ENCODE measurements at regions of chr11 and their contacts with region 1.

Region 1: DNA sequence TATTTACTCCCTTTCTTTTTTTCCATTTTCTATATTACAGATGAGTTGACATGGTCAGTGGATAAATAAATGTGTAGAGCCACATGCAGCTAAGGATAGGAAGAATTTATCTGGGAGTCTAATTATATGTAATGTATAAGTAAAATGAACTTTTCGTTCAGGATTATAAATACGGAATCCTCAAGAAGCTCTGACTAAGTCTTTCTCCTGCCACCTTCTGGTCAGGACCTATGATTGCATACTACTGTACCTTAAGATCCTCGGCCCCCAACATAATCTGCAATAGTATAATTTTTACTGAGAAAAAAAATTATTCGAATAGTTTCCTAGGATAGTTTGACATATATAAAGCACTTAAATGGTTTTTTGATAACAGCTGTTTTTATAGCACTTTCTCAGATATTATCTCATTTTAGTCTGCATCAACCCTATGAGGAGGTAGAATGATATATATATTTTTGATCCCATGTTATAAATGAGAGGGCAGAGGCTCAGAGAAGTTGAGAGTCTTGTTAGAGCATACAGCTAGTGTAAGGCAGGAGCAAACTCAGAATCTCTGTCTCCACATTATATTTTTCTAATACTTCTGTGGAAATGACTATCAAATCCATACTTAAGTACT is 36.1 kb downstream of the CCDC90B start:
- DNase-seq: peak; percentile 36 to 58
- ATAC-seq: peak; percentile 79 to 93; a peak in 4 of 6 replicates
- H3K4me3 ChIP-seq: no peak overlapping the region
- H3K27ac ChIP-seq: no peak overlapping the region
- H3K4me1 ChIP-seq: no peaks in the 10 kb centered on the region
- CTCF ChIP-seq: peak; percentile 77
- EP300 ChIP-seq: no peak
- POLR2A ChIP-seq: no peak
- RAD21 ChIP-seq: peak; percentile 65 to 66

Region 2: GRCh38 chr11:82900277-82901164 is 349.6 kb before region 1 on chr11 and contains the start of gene PRCP:
- CTCF ChIA-PET with region 1: interaction called, 17 read pairs
- POLR2A ChIA-PET with region 1: no interaction called
- DNase-seq: peak; percentile 91 to 94
- ATAC-seq: peak; percentile 90 to 95
- H3K4me3 ChIP-seq: peak within 1 kb of the TSS; percentile 72
- H3K27ac ChIP-seq: peak within 1 kb of the TSS; percentile 81 to 93
- H3K4me1 ChIP-seq: peaks cover 13% of the 10 kb centered on the region
- CTCF ChIP-seq: no peak
- EP300 ChIP-seq: no peak
- POLR2A ChIP-seq: peak; percentile 83
- RAD21 ChIP-seq: no peak; a peak in 1 of 5 replicates
- polyA plus RNA-seq, gene PRCP: 86.0 and 86.2 TPM in 2 replicates

Region 3: DNA sequence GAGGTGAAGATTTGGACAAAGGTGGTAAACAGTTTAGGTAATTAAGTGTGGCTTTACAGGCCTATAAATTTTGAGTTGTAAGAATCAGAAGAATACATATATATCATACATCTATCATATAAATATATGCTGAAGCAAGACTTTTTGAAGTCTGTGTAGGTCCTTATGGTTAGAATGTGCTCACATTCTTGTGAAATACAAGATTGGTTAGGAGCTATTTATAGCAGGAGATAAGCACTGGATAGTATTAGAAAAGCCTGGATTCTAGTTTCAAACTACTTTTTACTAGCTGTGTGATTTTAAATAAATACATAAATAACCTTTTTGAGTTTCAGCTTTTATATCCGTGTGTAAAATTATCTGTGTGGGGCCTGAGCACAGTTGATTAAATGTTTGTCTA is 14.3 kb before region 1 on chr11:
- CTCF ChIA-PET with region 1: interaction called, 12 read pairs
- POLR2A ChIA-PET with region 1: no interaction called
- DNase-seq: no peak
- ATAC-seq: no peak
- H3K4me3 ChIP-seq: no peak overlapping the region
- H3K27ac ChIP-seq: no peak overlapping the region
- H3K4me1 ChIP-seq: no peaks in the 10 kb centered on the region
- CTCF ChIP-seq: no peak
- EP300 ChIP-seq: no peak
- POLR2A ChIP-seq: no peak
- RAD21 ChIP-seq: no peak

Region 4: DNA sequence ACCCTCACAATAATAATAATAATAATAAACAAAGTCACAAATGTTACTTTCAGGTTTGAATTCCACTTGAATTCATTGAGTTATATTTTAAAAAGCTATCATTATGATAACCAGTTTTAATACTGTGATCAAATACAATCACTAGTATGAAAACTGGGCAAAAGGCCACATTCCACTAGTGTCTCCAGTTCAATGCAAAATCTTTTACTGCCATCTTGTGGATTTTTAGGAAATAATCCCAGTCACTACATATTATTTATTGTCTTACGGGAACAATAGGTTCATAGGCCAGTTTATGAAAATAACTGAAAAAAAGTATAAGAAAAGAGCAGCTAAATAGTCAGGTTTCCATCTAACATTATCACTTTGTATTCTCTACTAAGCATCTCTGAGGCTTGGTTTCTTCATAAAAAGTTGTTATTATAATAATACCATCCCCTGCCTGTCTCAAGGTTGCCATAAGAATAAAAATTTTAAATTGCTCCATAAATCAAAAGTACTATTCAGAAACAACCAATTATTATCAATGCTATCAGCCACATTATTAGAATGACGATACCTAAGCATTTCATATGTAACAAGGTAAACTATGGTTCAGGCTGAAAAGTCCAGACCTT is 570.0 kb after region 1 on chr11:
- CTCF ChIA-PET with region 1: interaction called, 12 read pairs
- POLR2A ChIA-PET with region 1: no interaction called
- DNase-seq: peak; percentile 41 to 57
- ATAC-seq: peak; percentile 64 to 87; a peak in 5 of 6 replicates
- H3K4me3 ChIP-seq: no peak overlapping the region
- H3K27ac ChIP-seq: no peak overlapping the region
- H3K4me1 ChIP-seq: no peaks in the 10 kb centered on the region
- CTCF ChIP-seq: peak; percentile 86
- EP300 ChIP-seq: no peak
- POLR2A ChIP-seq: no peak
- RAD21 ChIP-seq: peak; percentile 85 to 86